ENCODE measurements at regions of chr1 and their contacts with region 1.

Region 1: GRCh38 chr1:36187800-36188593 is 32.0 kb downstream of the MAP7D1 start:
- DNase-seq: peak; percentile 88
- H3K4me3 ChIP-seq: no peak overlapping the region
- H3K27ac ChIP-seq: peak overlapping the region; percentile 60
- H3K4me1 ChIP-seq: peaks cover 8% of the 10 kb centered on the region
- H3K27me3 ChIP-seq: no peaks in the 10 kb centered on the region
- CTCF ChIP-seq: peak; percentile 92 to 94

Region 2: DNA sequence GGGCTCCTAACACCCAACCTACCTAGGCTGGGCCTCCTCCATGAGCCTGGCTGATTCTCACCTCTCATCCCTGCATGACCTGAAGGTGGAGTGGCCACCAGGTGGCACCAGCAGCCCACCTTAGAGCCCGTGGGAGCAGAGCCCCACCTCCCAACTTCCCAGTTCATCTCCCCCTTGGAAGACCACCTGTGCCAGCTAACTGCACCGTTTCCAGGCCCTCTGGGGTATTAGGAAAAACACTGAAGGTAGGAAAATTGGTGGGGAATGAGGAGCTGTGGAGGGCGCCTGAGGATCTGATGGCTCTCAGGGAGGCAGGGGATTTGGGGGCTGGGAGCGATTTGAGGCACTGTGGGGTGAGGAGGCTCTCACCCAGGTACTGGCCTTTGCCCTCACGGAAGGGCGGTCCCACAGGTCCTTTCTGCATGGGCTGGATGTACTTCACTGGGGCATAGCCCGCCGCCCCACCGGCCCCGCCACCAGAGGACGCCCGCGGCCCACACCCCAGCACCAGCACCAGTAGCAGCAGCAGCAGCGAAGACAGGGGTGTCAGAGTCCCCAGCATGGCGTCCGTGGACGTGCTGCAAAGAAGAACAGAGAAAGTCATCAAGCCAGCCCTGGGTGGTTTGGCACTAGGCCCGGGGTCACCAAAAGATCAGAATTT is 88.2 kb before region 1 on chr1:
- CTCF ChIA-PET with region 1: no interaction called
- dilution Hi-C with region 1: no loop called
- in situ Hi-C with region 1: loop called (anchors 10 kb)
- intact Hi-C with region 1: loop called (anchors 1 kb)
- DNase-seq: peak; percentile 49
- H3K4me3 ChIP-seq: no peak overlapping the region
- H3K27ac ChIP-seq: no peak overlapping the region
- H3K4me1 ChIP-seq: peaks cover 4% of the 10 kb centered on the region
- H3K27me3 ChIP-seq: no peaks in the 10 kb centered on the region
- CTCF ChIP-seq: peak; percentile 86 to 96

Region 3: DNA sequence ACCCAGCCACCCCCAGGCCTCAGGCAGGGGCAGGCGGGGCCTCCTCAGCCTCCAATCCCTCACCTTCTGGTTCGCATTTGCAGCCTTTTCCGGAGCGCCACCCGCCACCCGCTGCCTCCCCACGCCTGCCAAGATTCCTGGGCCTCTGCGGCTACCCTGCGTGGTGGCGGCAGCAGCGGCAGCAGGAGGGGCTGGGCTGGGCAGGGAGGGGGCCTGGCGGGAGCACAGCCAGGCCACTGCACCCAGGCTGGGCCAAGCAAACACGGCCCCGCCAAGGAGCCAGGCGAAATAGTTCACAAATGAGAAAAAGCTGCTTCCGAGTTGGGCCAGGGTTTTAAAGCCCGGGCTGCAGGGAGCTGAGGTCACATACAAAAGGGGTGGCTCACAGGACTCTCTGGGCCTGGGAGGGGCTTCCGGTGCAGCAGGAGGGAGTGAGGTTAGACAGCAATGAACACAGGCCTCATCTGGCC is 72.8 kb before region 1 on chr1:
- CTCF ChIA-PET with region 1: no interaction called
- dilution Hi-C with region 1: loop called (anchors 5 kb)
- in situ Hi-C with region 1: no loop called
- intact Hi-C with region 1: no loop called
- DNase-seq: peak; percentile 52
- H3K4me3 ChIP-seq: peak overlapping the region in 1 of 3 experiments; percentile 6
- H3K27ac ChIP-seq: peak overlapping the region; percentile 45
- H3K4me1 ChIP-seq: peaks cover 27% of the 10 kb centered on the region
- H3K27me3 ChIP-seq: no peaks in the 10 kb centered on the region
- CTCF ChIP-seq: no peak

Region 4: GRCh38 chr1:36134505-36135329 is 53.3 kb before region 1 on chr1:
- CTCF ChIA-PET with region 1: interaction called, 9 read pairs
- dilution Hi-C with region 1: no loop called
- in situ Hi-C with region 1: no loop called
- intact Hi-C with region 1: loop called (anchors 1 kb)
- DNase-seq: peak; percentile 91
- H3K4me3 ChIP-seq: no peak overlapping the region
- H3K27ac ChIP-seq: peak overlapping the region; percentile 79
- H3K4me1 ChIP-seq: peaks cover 41% of the 10 kb centered on the region
- H3K27me3 ChIP-seq: no peaks in the 10 kb centered on the region
- CTCF ChIP-seq: peak; percentile 62 to 64

Region 5: GRCh38 chr1:36161641-36162531 is 26.1 kb before region 1 on chr1:
- CTCF ChIA-PET with region 1: interaction called, 5 read pairs
- dilution Hi-C with region 1: no loop called
- in situ Hi-C with region 1: no loop called
- intact Hi-C with region 1: loop called (anchors 2 kb)
- DNase-seq: peak; percentile 94
- H3K4me3 ChIP-seq: peak overlapping the region; percentile 7 to 41 (median 8)
- H3K27ac ChIP-seq: peak overlapping the region; percentile 83
- H3K4me1 ChIP-seq: peaks cover 73% of the 10 kb centered on the region
- H3K27me3 ChIP-seq: no peaks in the 10 kb centered on the region
- CTCF ChIP-seq: no peak

Region 6: GRCh38 chr1:36223993-36224536 is 36.1 kb after region 1 on chr1 and contains the start of gene THRAP3:
- CTCF ChIA-PET with region 1: no interaction called
- dilution Hi-C with region 1: no loop called
- in situ Hi-C with region 1: no loop called
- intact Hi-C with region 1: loop called (anchors 1 kb)
- DNase-seq: peak; percentile 100
- H3K4me3 ChIP-seq: peak within 1 kb of the TSS; percentile 86 to 90 (median 89)
- H3K27ac ChIP-seq: peak within 1 kb of the TSS; percentile 98
- H3K4me1 ChIP-seq: peaks cover 8% of the 10 kb centered on the region
- H3K27me3 ChIP-seq: no peaks in the 10 kb centered on the region
- CTCF ChIP-seq: no peak
- total RNA-seq, gene THRAP3: 106 to 128 TPM

Region 7: GRCh38 chr1:36269408-36269838 is 81.4 kb after region 1 on chr1:
- CTCF ChIA-PET with region 1: no interaction called
- dilution Hi-C with region 1: no loop called
- in situ Hi-C with region 1: no loop called
- intact Hi-C with region 1: no loop called
- DNase-seq: no peak
- H3K4me3 ChIP-seq: no peak overlapping the region
- H3K27ac ChIP-seq: no peak overlapping the region
- H3K4me1 ChIP-seq: no peaks in the 10 kb centered on the region
- H3K27me3 ChIP-seq: no peaks in the 10 kb centered on the region
- CTCF ChIP-seq: no peak

Region 8: DNA sequence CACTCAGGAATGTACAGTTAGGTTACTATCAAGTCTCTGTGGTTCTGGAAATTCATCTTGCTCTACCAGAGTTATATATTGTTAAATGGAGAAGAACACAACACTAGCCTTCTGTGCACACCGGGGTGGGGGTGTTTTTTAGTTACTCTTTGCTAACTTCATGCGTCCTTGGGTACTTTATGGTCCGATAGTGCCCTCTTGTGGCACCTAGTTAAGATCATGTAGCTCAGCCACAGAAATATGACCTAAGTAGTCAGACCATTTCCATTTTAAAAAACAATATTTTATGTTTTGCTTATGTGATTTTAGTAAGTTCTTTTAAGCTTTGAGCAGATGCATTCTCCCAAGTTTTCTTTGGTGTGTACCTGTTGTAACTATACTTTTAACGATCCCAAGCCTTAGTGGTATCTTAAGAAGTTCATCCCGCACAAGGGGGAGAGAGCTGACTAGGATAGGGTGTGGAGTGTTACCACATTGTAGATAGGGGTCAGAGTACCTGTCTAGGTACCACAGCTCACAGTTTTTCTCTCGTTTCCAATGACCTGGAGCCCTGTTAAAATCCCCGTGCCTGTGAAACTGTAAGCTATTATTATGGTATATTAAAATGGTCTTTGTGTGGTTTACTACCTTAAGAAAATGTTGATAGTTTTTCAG is 97.6 kb after region 1 on chr1:
- CTCF ChIA-PET with region 1: no interaction called
- dilution Hi-C with region 1: no loop called
- in situ Hi-C with region 1: loop called in 1 of 2 experiments (anchors 10 kb)
- intact Hi-C with region 1: loop called (anchors 1 kb)
- DNase-seq: peak; percentile 68
- H3K4me3 ChIP-seq: no peak overlapping the region
- H3K27ac ChIP-seq: no peak overlapping the region
- H3K4me1 ChIP-seq: no peaks in the 10 kb centered on the region
- H3K27me3 ChIP-seq: no peaks in the 10 kb centered on the region
- CTCF ChIP-seq: peak; percentile 60 to 70

Measured in mammary epithelial cell (primary cell).